CD4-positive, alpha-beta T cell (primary cell): ENCODE measurements at regions of chr10 and their contacts with region 1.

Region 1: GRCh38 chr10:97072851-97073665 is 112.7 kb downstream of the SLIT1 start:
- DNase-seq: peak; percentile 57 to 82 (median 76)
- ATAC-seq: peak; percentile 82
- H3K4me3 ChIP-seq: no peak overlapping the region
- H3K4me3 Mint-ChIP-seq: no peak overlapping the region
- H3K27ac ChIP-seq: no peak overlapping the region
- H3K27ac Mint-ChIP-seq: no peak overlapping the region
- H3K4me1 ChIP-seq: peaks cover 7% of the 10 kb centered on the region
- H3K4me1 Mint-ChIP-seq: peaks cover 11% of the 10 kb centered on the region
- H3K27me3 ChIP-seq: peaks cover 0 to 14% of the 10 kb centered on the region in 2 experiments
- H3K27me3 Mint-ChIP-seq: peaks cover 39% of the 10 kb centered on the region
- CTCF ChIP-seq: peak; percentile 83

Region 2: DNA sequence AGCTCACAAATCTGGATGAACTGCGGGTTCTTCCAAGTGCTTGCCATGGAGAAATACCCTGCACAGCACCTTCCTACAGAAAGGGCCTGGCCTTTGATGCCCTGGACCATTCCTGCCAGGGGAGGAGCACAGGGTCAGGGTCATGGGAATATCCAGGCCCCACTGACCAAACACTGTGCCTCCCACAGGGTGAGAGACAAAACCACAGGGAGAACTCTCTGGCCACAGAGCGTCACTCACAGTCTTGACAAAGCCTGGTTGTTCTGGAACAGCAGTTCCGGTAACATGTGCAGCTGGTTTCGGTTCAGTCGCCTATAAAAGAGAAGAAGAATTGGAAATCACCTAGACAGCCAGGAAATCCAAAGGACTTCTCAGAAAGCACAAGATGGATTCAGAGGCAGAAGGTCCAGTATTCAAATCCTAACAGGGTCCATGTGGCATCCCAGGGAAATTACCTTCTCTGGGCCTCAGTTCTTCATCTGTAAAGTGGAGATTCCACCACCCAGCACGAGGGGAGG is 84.6 kb after region 1 on chr10:
- CTCF ChIA-PET with region 1: no interaction called
- POLR2A ChIA-PET with region 1: no interaction called
- intact Hi-C with region 1: no loop called
- DNase-seq: no peak
- ATAC-seq: no peak
- H3K4me3 ChIP-seq: no peak overlapping the region
- H3K4me3 Mint-ChIP-seq: no peak overlapping the region
- H3K27ac ChIP-seq: no peak overlapping the region
- H3K27ac Mint-ChIP-seq: no peak overlapping the region
- H3K4me1 ChIP-seq: no peaks in the 10 kb centered on the region
- H3K4me1 Mint-ChIP-seq: no peaks in the 10 kb centered on the region
- H3K27me3 ChIP-seq: no peaks in the 10 kb centered on the region
- H3K27me3 Mint-ChIP-seq: no peaks in the 10 kb centered on the region
- CTCF ChIP-seq: no peak

Region 3: DNA sequence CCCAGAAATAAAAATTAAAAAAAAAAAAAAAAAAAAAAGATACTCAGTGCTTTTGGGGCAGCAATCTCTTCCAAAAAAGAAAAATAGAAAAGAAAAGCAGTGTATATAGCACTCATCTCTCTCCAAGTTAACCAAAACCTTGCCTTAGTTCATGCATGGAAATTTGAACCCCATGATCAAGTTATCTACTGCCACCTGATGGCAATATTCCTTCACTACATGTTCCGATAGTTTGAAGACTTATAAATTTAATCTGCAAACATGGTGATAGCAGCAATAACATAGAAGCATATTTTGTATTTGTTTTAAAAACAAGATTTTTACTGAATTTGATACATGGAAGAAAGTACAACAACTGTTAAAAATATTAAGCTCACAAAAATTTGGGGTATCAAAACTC is 161.3 kb after region 1 on chr10:
- CTCF ChIA-PET with region 1: interaction called, 3 read pairs
- POLR2A ChIA-PET with region 1: no interaction called
- intact Hi-C with region 1: loop called in 1 of 2 experiments (anchors 1 kb)
- DNase-seq: peak in 3 of 14 experiments; percentile 15 to 37 (median 26)
- ATAC-seq: no peak
- H3K4me3 ChIP-seq: no peak overlapping the region
- H3K4me3 Mint-ChIP-seq: no peak overlapping the region
- H3K27ac ChIP-seq: no peak overlapping the region
- H3K27ac Mint-ChIP-seq: no peak overlapping the region
- H3K4me1 ChIP-seq: no peaks in the 10 kb centered on the region
- H3K4me1 Mint-ChIP-seq: no peaks in the 10 kb centered on the region
- H3K27me3 ChIP-seq: no peaks in the 10 kb centered on the region
- H3K27me3 Mint-ChIP-seq: no peaks in the 10 kb centered on the region
- CTCF ChIP-seq: peak; percentile 54

Region 4: DNA sequence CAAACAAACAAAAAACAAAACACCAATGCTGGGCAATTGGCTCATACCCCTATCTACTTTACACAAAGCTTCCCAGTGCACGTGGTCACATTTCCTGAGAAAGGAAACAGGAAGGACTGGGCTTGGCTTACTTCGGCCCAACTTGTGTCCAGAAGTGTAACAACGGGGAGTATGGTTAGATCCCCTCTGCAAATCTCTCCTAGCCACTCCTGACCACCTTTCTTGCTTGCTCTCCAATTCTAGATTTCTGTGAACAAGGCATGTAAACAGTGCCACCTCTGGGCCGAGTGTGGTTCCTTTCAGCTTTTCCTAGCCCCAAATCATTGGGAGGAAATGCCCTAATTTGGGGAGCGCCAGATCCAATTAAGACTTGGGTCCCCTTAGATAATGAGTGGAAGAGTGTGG is 282.5 kb after region 1 on chr10:
- CTCF ChIA-PET with region 1: no interaction called
- POLR2A ChIA-PET with region 1: no interaction called
- intact Hi-C with region 1: loop called (anchors 2 to 10 kb)
- DNase-seq: peak in 7 of 14 experiments; percentile 9 to 59 (median 35)
- ATAC-seq: peak; percentile 43
- H3K4me3 ChIP-seq: no peak overlapping the region
- H3K4me3 Mint-ChIP-seq: no peak overlapping the region
- H3K27ac ChIP-seq: no peak overlapping the region
- H3K27ac Mint-ChIP-seq: no peak overlapping the region
- H3K4me1 ChIP-seq: peaks cover 3% of the 10 kb centered on the region
- H3K4me1 Mint-ChIP-seq: no peaks in the 10 kb centered on the region
- H3K27me3 ChIP-seq: no peaks in the 10 kb centered on the region
- H3K27me3 Mint-ChIP-seq: no peaks in the 10 kb centered on the region
- CTCF ChIP-seq: peak; percentile 53